ENCODE measurements at regions of chr10 and their contacts with region 1.

Region 1: DNA sequence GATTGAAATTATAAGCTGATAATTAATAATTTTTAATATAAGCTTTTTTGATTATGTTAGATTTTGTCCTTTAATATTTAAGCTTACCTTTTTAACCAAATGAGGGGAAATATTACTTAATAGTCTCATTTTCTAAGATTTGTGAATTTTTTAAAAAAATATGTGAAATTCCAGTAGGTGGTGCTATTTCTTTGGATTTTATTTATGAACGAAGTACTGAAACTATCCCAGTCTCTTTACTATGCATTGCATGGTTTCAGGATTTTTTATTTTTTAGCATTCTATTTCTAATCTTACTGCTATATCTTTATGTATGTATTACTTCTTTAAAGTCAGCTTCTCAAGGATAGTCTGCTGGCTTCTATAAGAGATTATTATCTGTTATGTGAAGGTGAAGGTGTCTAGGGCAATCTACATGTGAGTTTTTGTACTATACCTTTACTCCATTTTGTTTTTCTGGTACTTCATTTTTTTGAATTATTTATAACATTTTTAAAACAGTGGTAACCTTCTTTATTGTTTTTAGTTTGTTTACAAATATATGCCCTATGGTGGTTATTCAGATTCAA is 78.3 kb downstream of the ATRNL1 start:
- DNase-seq: no peak
- H3K4me3 ChIP-seq: no peak overlapping the region
- H3K4me3 Mint-ChIP-seq: no peak overlapping the region
- H3K27ac Mint-ChIP-seq: no peak overlapping the region
- H3K4me1 ChIP-seq: no peaks in the 10 kb centered on the region
- H3K4me1 Mint-ChIP-seq: no peaks in the 10 kb centered on the region
- H3K27me3 ChIP-seq: no peaks in the 10 kb centered on the region
- H3K27me3 Mint-ChIP-seq: peaks cover 3% of the 10 kb centered on the region
- CTCF ChIP-seq: peak; percentile 36 to 41

Region 2: GRCh38 chr10:115355162-115355760 is 183.8 kb after region 1 on chr10:
- CTCF ChIA-PET with region 1: no interaction called
- POLR2A ChIA-PET with region 1: no interaction called
- intact Hi-C with region 1: loop called (anchors 5 kb)
- DNase-seq: peak; percentile 68 to 74
- H3K4me3 ChIP-seq: no peak overlapping the region
- H3K4me3 Mint-ChIP-seq: no peak overlapping the region
- H3K27ac Mint-ChIP-seq: no peak overlapping the region
- H3K4me1 ChIP-seq: no peaks in the 10 kb centered on the region
- H3K4me1 Mint-ChIP-seq: no peaks in the 10 kb centered on the region
- H3K27me3 ChIP-seq: no peaks in the 10 kb centered on the region
- H3K27me3 Mint-ChIP-seq: peaks cover 4% of the 10 kb centered on the region
- CTCF ChIP-seq: peak; percentile 77 to 81

Region 3: GRCh38 chr10:115417585-115418265 is 246.2 kb after region 1 on chr10:
- CTCF ChIA-PET with region 1: no interaction called
- POLR2A ChIA-PET with region 1: no interaction called
- intact Hi-C with region 1: loop called (anchors 2 kb)
- DNase-seq: peak; percentile 64
- H3K4me3 ChIP-seq: no peak overlapping the region
- H3K4me3 Mint-ChIP-seq: no peak overlapping the region
- H3K27ac Mint-ChIP-seq: no peak overlapping the region
- H3K4me1 ChIP-seq: no peaks in the 10 kb centered on the region
- H3K4me1 Mint-ChIP-seq: no peaks in the 10 kb centered on the region
- H3K27me3 ChIP-seq: no peaks in the 10 kb centered on the region
- H3K27me3 Mint-ChIP-seq: peaks cover 7% of the 10 kb centered on the region
- CTCF ChIP-seq: peak; percentile 61 to 76

Measured in Caco-2 (cell line).